PC-3 (cell line): ENCODE measurements at regions of chr7 and their contacts with region 1.

Region 1: GRCh38 chr7:112414855-112415490 is 35.3 kb upstream of the IFRD1 start:
- DNase-seq: peak; percentile 70
- ATAC-seq: peak; percentile 83
- H3K4me3 ChIP-seq: no peak overlapping the region
- H3K27ac ChIP-seq: no peak overlapping the region
- H3K4me1 ChIP-seq: peaks cover 11% of the 10 kb centered on the region; the same call in 1 of the 2 replicates
- H3K27me3 ChIP-seq: no peaks in the 10 kb centered on the region
- CTCF ChIP-seq: peak; percentile 78

Region 2: DNA sequence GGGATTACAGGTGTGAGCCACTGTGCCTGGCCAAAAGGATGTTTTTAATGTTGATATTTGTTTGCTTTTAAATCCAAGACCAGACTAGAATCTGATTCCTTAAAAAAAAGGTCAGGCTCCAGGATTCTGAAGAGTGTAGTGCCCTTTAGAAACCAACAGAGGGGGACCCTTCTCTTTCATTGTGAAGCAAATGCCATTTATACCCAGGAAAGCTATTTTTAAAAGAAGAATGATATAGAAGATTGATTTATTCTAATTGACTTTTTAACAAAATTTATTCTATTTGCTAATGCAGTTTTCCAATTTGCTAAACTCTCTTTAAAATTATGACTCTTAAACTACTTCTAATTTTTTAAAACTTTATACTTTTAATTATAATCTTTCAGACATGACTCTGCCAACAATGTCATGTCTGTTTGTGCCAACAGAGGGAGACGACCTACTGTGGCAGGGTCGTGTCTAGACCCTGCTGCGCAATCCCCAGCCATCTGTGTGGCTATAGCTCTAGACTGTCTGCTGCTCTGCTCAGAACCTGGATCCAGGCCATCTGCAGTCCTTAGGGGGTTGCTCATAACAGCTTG is 651.7 kb before region 1 on chr7:
- CTCF ChIA-PET with region 1: no interaction called
- POLR2A ChIA-PET with region 1: no interaction called
- intact Hi-C with region 1: loop called (anchors 1 kb)
- DNase-seq: peak; percentile 55
- ATAC-seq: peak; percentile 84
- H3K4me3 ChIP-seq: no peak overlapping the region
- H3K27ac ChIP-seq: no peak overlapping the region
- H3K4me1 ChIP-seq: peaks cover 6% of the 10 kb centered on the region
- H3K27me3 ChIP-seq: no peaks in the 10 kb centered on the region
- CTCF ChIP-seq: peak; percentile 71

Region 3: DNA sequence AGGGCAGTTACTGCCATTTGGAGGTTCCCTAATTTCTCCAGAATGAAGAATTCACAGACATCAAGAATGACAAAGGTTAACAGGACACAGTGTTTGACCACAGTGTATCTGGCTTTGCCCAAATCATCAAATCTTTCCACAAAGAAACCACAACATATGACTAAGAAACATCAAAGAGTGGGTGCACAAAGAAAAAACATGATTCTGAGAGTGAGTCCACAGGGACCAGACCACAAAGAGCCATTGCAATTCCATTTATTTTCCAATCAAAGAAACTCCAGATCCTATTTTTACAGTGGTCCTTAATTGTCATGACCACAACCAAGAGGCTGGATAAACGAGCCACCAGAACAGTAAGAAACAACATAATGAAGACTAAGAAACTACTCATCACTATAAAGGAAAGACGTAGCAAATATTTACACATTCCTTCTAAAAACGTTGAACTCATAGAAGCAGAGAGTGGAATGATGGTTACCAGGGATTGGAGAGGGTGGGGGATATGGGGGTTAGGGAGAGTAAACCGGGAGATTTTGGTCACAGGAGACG is 495.3 kb before region 1 on chr7:
- CTCF ChIA-PET with region 1: no interaction called
- POLR2A ChIA-PET with region 1: no interaction called
- intact Hi-C with region 1: loop called (anchors 10 kb)
- DNase-seq: peak; percentile 76
- ATAC-seq: peak; percentile 90
- H3K4me3 ChIP-seq: peak overlapping the region; percentile 46
- H3K27ac ChIP-seq: peak overlapping the region; percentile 59
- H3K4me1 ChIP-seq: peaks cover 26% of the 10 kb centered on the region
- H3K27me3 ChIP-seq: no peaks in the 10 kb centered on the region
- CTCF ChIP-seq: no peak

Region 4: GRCh38 chr7:112089551-112089950 is 325.4 kb before region 1 on chr7:
- CTCF ChIA-PET with region 1: no interaction called
- POLR2A ChIA-PET with region 1: no interaction called
- intact Hi-C with region 1: loop called (anchors 5 kb)
- DNase-seq: no peak
- ATAC-seq: no peak
- H3K4me3 ChIP-seq: no peak overlapping the region
- H3K27ac ChIP-seq: no peak overlapping the region
- H3K4me1 ChIP-seq: peaks cover 27% of the 10 kb centered on the region
- H3K27me3 ChIP-seq: no peaks in the 10 kb centered on the region
- CTCF ChIP-seq: no peak

Region 5: DNA sequence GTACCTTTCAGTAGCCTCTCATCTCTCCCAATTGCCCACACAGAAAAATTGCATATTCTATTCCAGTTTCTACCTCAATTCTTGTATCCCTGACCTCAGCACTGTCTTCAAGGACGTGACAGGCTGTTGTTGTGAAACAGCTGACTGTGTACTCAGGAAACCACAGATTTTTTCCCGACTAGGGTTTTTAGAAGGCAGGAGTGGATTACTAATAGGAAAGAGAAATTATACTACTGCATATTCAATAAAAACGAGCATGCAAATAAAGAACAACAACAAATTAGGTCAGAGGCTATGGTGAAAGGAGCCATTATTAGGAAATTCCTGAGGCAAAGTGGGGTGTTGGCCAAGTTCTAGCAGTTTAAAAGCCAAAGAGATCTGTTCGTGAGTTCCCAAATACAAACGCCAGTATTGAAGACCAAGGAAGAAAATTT is 302.1 kb before region 1 on chr7:
- CTCF ChIA-PET with region 1: no interaction called
- POLR2A ChIA-PET with region 1: no interaction called
- intact Hi-C with region 1: no loop called
- DNase-seq: no peak
- ATAC-seq: peak; percentile 48
- H3K4me3 ChIP-seq: no peak overlapping the region
- H3K27ac ChIP-seq: no peak overlapping the region
- H3K4me1 ChIP-seq: no peaks in the 10 kb centered on the region
- H3K27me3 ChIP-seq: no peaks in the 10 kb centered on the region
- CTCF ChIP-seq: no peak